PC-9 (cell line): ENCODE measurements at regions of chr22 and their contacts with region 1.

Region 1: GRCh38 chr22:35947794-35948425 is 80.7 kb downstream of the RBFOX2 start:
- DNase-seq: no peak
- H3K4me3 ChIP-seq: no peak overlapping the region
- H3K27ac ChIP-seq: no peak overlapping the region
- H3K4me1 ChIP-seq: no peaks in the 10 kb centered on the region
- H3K27me3 ChIP-seq: no peaks in the 10 kb centered on the region
- CTCF ChIP-seq: no peak

Region 2: DNA sequence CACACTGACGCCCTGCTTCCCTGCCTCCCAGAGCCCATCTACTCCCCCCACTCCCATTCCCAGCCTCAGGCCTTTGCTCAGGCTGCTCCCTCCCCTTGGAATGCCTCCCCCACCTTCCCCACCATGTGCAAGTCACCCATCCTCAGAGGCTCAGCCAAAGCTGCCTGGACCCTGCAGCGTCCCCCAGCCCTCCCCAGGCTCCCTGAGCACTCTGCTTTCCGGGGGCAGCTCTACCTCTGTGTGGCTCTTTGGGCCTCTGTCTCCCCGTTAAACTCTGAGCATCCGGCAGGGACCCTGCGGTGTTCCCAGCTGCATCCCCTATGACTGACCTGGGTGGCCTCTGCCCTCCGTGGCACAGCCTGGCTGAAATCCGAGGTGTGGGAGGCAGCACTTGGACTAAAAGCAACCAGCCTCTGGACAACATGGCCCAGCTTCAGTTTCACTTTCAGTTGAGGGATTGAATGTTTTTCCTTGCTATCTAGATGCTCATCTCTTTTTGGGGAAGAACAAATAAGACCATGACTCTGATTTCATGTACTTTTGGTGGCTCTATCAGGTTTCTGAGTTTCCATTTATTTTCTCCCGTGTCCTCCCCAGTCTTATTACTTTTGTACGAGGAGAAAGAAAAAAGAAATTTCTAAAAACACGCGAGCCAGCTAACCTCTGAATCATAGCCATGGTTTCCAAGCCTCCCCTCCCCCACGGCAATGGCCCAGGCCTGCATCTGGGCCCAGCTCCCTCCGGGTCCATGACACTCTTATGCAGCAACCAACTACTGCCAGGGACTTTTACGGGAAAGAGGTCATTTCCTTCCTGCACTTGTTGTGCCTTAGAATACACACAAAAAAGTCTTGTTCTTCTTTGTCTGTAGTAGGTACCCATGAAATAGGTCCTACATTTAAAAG is 208.9 kb after region 1 on chr22:
- CTCF ChIA-PET with region 1: no interaction called
- POLR2A ChIA-PET with region 1: interaction called, 27 read pairs
- intact Hi-C with region 1: no loop called
- DNase-seq: peak in 1 of 2 experiments; percentile 52
- H3K4me3 ChIP-seq: 0 out of 2 replicates have a peak overlapping the region, but pooled peaks have one; percentile 1
- H3K27ac ChIP-seq: no peak overlapping the region
- H3K4me1 ChIP-seq: no peaks in the 10 kb centered on the region
- H3K27me3 ChIP-seq: no peaks in the 10 kb centered on the region
- CTCF ChIP-seq: no peak